ENCODE measurements at regions of chr16 and their contacts with region 1.

Region 1: DNA sequence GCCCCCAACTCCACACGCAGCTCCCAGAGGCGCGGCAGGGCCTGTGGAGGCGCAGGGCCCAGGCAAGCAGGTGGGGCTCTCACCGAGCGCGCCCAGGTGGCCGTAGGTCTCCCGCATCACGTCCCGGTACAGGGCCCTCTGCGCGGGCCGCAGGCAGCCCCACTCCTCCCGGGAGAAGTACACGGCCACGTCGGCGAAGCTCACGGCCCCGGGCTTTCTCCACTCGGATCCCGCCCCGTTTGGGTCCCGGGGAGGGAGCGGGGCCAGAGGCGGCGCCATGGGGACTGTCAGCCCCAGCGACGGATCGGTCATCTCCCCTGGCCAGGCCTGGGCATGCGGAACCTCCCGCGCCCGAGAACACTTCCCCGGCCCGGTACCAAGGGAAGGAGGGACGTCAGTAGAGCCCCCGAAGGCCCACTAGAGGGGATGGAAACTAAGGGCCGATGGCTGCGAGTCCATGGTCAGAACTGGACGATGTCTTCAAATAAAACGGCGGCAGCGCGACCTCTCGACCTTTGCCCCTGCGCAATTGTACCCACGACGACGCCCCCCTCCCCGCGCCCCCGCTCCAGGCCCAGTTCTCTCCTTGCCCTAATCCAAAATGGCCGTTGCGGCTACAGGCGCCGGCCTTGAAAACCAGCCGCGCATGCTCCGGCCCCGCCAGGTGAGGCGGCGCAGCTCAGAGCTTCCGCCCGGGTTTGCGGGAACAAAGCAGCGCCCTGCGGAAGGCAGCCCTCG is at the start of gene ZNF747:
- DNase-seq: peak; percentile 86 to 96
- ATAC-seq: peak; percentile 86 to 93 (median 89)
- H3K4me3 ChIP-seq: peak within 1 kb of the TSS; percentile 87
- H3K4me3 Mint-ChIP-seq: peak within 1 kb of the TSS; percentile 96
- H3K27ac ChIP-seq: peak within 1 kb of the TSS; percentile 94
- H3K27ac Mint-ChIP-seq: peak within 1 kb of the TSS; percentile 83 to 95
- H3K4me1 ChIP-seq: peaks cover 38% of the 10 kb centered on the region
- H3K4me1 Mint-ChIP-seq: peaks cover 22 to 30% of the 10 kb centered on the region in 2 donors
- H3K27me3 ChIP-seq: no peaks in the 10 kb centered on the region
- H3K27me3 Mint-ChIP-seq: no peaks in the 10 kb centered on the region
- CTCF ChIP-seq: no peak
- total RNA-seq, gene ZNF747: 5.0 to 8.6 (median 6.3) TPM

Region 2: DNA sequence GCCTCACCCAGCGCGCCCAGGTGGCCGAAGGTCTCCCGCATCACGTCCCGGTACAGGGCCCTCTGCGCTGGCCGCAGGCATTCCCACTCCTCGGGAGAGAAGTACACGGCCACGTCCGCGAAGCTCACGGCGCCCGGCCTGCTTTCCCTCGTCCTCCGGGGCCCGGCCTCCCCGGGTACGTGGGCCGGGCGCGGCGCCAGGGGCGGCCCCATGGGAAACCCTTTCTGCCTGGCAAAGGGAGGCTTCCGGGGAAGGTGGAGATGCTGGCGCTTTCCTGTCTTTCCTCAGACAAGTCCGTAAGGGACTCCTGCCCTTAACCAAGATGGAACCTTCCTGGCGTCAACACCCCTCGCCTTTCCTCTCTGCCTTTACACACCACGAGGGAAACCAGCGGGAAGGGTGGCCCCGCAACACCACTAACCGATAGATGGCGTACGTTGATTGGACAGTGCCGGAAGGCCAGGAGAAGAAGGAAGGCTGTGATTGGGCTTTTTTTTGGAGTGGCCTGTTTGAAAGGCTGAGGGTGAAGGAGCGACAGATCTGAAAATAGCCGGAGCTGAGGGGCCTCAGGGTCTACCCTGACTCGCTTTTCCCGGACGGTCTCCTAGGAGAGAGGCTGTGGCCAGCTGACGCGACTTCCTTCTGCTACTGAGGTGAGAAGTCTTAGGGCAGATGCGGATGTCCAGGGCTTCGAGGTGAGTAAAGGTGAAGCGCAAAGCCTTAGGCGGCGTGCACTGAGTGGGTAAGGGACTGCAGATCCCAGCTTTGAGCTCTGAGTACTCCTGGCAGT is 51.1 kb after region 1 on chr16 and contains the start of gene ZNF785:
- intact Hi-C with region 1: loop called (anchors 5 kb)
- DNase-seq: peak; percentile 85 to 97
- ATAC-seq: peak; percentile 98 to 99 (median 99)
- H3K4me3 ChIP-seq: peak within 1 kb of the TSS; percentile 58
- H3K4me3 Mint-ChIP-seq: peak within 1 kb of the TSS; percentile 90
- H3K27ac ChIP-seq: peak within 1 kb of the TSS; percentile 26
- H3K27ac Mint-ChIP-seq: peak within 1 kb of the TSS; percentile 86 to 87
- H3K4me1 ChIP-seq: peaks cover 14% of the 10 kb centered on the region
- H3K4me1 Mint-ChIP-seq: peaks cover 9 to 14% of the 10 kb centered on the region in 2 donors
- H3K27me3 ChIP-seq: no peaks in the 10 kb centered on the region
- H3K27me3 Mint-ChIP-seq: no peaks in the 10 kb centered on the region
- CTCF ChIP-seq: no peak
- total RNA-seq, gene ZNF785: 7.5 to 15.2 (median 10.4) TPM

Measured in natural killer cell (primary cell).